ENCODE measurements at regions of chr3 and their contacts with region 1.

Region 1: GRCh38 chr3:152444029-152444641 is 175.4 kb downstream of the MBNL1 start:
- DNase-seq: peak; percentile 80
- H3K4me3 ChIP-seq: no peak overlapping the region
- H3K27ac ChIP-seq: peak overlapping the region; percentile 14
- H3K4me1 ChIP-seq: peaks cover 12% of the 10 kb centered on the region
- H3K27me3 ChIP-seq: no peaks in the 10 kb centered on the region
- CTCF ChIP-seq: peak; percentile 25 to 46
- POLR2A ChIP-seq: no peak

Region 2: DNA sequence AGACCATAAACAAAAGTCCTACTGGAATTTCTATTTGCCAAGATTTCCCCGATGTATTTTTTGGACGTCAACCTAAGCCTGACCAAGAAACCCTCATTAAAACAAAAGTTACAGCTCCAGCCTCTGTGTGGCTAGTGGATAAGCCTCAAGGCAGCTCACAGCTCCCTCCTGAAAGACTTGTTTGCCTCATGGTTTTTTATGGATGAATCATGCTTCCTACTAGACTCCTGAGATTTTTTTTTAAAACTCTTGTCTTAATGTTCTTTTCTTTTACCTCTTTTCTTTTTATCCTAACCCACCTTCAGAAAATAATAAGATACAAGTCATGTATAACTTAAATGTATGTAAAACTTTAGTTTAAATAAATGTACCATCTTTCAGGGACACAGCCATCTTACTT is 518.3 kb before region 1 on chr3:
- CTCF ChIA-PET with region 1: no interaction called
- POLR2A ChIA-PET with region 1: no interaction called
- dilution Hi-C with region 1: no loop called
- intact Hi-C with region 1: loop called (anchors 10 kb)
- DNase-seq: peak; percentile 67
- H3K4me3 ChIP-seq: no peak overlapping the region
- H3K27ac ChIP-seq: peak overlapping the region; percentile 29
- H3K4me1 ChIP-seq: peaks cover 32% of the 10 kb centered on the region
- H3K27me3 ChIP-seq: no peaks in the 10 kb centered on the region
- CTCF ChIP-seq: no peak
- POLR2A ChIP-seq: no peak

Region 3: DNA sequence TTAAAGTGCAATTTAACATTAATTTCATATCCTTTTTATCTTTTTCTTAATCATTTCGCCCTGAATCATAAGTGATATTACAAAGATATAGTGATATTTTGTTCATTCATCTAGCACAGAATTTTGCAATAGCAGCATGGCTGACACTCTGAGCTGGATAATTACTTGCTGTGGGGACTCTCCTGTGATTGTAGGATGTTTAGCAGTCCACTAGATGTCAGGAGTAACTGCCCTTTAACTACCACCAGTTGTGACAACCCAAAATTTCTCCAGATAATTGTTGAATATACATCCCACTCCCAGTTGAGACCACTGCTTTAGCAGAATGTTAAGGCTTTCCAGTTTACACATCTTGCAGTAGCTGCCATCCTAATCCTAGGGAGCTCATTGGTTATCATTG is 372.2 kb before region 1 on chr3:
- CTCF ChIA-PET with region 1: interaction called, 43 read pairs
- POLR2A ChIA-PET with region 1: interaction called, 6 read pairs
- dilution Hi-C with region 1: no loop called
- intact Hi-C with region 1: loop called (anchors 2 kb)
- DNase-seq: peak; percentile 50
- H3K4me3 ChIP-seq: no peak overlapping the region
- H3K27ac ChIP-seq: no peak overlapping the region
- H3K4me1 ChIP-seq: peaks cover 4% of the 10 kb centered on the region
- H3K27me3 ChIP-seq: no peaks in the 10 kb centered on the region
- CTCF ChIP-seq: peak; percentile 37 to 40
- POLR2A ChIP-seq: no peak

Region 4: GRCh38 chr3:152183473-152183872 is 260.7 kb before region 1 on chr3:
- CTCF ChIA-PET with region 1: interaction called, 25 read pairs
- POLR2A ChIA-PET with region 1: no interaction called
- dilution Hi-C with region 1: no loop called
- intact Hi-C with region 1: loop called (anchors 1 kb)
- DNase-seq: peak; percentile 56
- H3K4me3 ChIP-seq: no peak overlapping the region
- H3K27ac ChIP-seq: no peak overlapping the region
- H3K4me1 ChIP-seq: no peaks in the 10 kb centered on the region
- H3K27me3 ChIP-seq: no peaks in the 10 kb centered on the region
- CTCF ChIP-seq: peak; percentile 53 to 63
- POLR2A ChIP-seq: no peak

Region 5: GRCh38 chr3:152328841-152329240 is 115.3 kb before region 1 on chr3:
- CTCF ChIA-PET with region 1: interaction called, 11 read pairs
- POLR2A ChIA-PET with region 1: no interaction called
- dilution Hi-C with region 1: no loop called
- intact Hi-C with region 1: no loop called
- DNase-seq: peak; percentile 95
- H3K4me3 ChIP-seq: peak overlapping the region in 1 of 3 experiments; percentile 43
- H3K27ac ChIP-seq: peak overlapping the region; percentile 93
- H3K4me1 ChIP-seq: peaks cover 83% of the 10 kb centered on the region
- H3K27me3 ChIP-seq: no peaks in the 10 kb centered on the region
- CTCF ChIP-seq: no peak
- POLR2A ChIP-seq: peak; percentile 49

Region 6: GRCh38 chr3:152349392-152349791 is 94.7 kb before region 1 on chr3:
- CTCF ChIA-PET with region 1: interaction called, 3 read pairs
- POLR2A ChIA-PET with region 1: no interaction called
- dilution Hi-C with region 1: no loop called
- intact Hi-C with region 1: loop called (anchors 5 kb)
- DNase-seq: no peak
- H3K4me3 ChIP-seq: no peak overlapping the region
- H3K27ac ChIP-seq: peak overlapping the region; percentile 49
- H3K4me1 ChIP-seq: peaks cover 56% of the 10 kb centered on the region
- H3K27me3 ChIP-seq: no peaks in the 10 kb centered on the region
- CTCF ChIP-seq: no peak
- POLR2A ChIP-seq: no peak

Region 7: DNA sequence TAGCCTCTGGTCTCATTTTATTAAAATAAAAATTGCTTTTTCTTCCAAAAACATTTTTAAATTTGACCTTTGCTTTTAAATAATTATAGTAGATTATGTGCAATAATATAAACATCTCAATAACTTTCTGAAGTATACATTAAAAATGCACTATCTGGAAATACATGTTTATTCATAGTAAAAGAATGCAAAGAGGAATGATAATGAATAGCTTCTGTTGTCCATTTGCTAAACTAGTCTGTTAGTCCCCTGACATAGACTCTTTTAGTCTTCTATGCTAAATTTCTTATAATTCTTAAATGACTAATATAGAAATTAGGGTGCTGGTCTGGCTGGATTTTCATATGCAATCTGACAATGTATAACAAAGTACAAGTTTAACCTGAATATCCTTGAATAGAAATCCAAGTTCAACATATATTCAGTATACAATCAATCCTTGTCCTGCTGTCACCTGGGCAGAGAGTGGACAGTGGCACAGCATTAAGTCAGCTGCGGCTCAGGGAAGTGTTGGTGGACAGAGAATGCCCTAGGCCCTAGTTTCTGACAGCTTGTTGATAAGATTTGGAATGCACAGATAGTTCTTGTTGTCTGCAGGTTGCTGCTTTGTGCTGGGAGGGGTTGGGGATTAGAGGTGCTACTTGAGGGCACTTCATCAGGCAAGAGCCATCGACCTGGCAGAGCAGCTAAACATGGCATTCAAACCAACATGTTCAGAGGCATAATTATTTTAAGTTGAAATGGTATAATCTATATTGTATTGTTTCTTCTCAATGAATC is 13.7 kb before region 1 on chr3:
- CTCF ChIA-PET with region 1: interaction called, 10 read pairs
- POLR2A ChIA-PET with region 1: interaction called, 6 read pairs
- dilution Hi-C with region 1: no loop called
- intact Hi-C with region 1: no loop called
- DNase-seq: no peak
- H3K4me3 ChIP-seq: no peak overlapping the region
- H3K27ac ChIP-seq: no peak overlapping the region
- H3K4me1 ChIP-seq: peaks cover 1% of the 10 kb centered on the region
- H3K27me3 ChIP-seq: no peaks in the 10 kb centered on the region
- CTCF ChIP-seq: no peak
- POLR2A ChIP-seq: no peak